ENCODE measurements at regions of chr11 and their contacts with region 1.

Region 1: GRCh38 chr11:1050581-1051355 is 14.2 kb upstream of the MUC6 start:
- DNase-seq: peak; percentile 74
- ATAC-seq: peak; percentile 95

Region 2: DNA sequence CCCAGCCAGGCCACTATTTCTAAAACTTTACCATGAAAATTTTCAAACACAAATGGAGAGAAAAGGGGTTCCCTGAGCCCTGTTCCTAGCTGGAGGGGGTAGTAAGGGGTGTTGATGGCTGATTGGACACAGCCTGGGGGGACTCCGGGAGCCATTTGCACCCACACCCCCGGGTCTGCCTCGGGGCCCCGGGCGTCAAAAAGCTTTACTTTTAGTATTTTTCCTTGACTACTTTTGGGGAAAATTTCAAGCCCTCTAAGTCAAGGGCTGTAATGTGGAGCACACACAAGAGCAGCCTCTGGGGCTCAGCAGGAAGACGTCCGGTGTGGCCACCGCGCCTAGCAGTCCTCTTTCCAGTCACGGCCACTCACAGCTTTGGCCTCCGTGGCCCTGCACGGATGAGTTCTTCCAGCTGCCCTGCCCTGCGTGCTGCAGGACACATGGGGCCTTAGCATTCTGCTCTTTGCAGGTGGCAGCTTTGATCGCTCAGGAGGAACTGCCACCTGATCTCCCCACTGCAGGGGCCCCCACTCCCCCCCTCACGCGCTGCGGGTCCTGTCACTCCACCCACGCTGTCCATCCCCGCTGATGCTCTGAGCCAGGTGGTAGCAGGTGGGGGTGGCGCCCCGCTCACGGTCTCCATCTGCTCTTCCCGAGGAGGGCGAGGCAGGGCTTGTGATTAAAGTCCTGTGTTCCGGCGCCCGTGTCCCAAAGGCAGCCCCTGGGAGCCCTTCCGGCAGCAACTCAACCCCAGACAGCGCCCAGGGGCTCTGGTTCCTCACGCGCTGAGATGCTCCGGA is 558.1 kb before region 1 on chr11:
- intact Hi-C with region 1: no loop called
- DNase-seq: no peak
- ATAC-seq: no peak

Region 3: DNA sequence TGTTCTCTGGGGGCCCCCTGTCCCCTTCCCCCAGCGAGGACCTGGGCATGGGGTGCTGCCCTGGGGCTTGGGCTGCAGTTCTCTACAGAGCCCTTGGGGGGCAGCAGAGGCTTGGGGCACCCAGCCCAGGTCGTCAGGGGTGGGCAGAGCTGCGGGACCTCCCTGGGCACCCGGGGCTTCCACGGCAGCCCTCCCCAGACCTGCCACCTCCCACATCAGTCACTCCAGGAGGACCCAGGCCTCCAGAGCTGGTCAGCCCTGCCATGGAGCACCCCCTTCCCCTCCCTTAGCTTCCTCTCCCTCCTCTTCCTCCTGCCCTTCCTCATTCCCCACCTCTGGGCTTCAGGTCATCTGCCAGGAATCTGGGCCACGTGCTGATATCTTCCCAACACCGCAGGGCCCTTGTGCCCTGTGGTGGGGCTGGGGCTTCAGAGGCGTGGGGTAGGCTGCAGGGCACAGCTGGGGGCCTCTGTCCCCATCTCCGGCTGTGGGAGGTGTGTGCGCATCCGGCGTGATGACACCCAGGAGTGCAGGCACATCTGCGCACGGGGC is 202.3 kb before region 1 on chr11:
- intact Hi-C with region 1: loop called (anchors 5 kb)
- DNase-seq: peak; percentile 67
- ATAC-seq: no peak

Region 4: GRCh38 chr11:925496-926321 is 125.1 kb before region 1 on chr11 and contains the start of gene AP2A2:
- intact Hi-C with region 1: loop called (anchors 10 kb)
- DNase-seq: peak; percentile 94
- ATAC-seq: peak; percentile 94
- total RNA-seq, gene AP2A2: 53.5 TPM

Measured in Right ventricle myocardium superior (tissue), 1 donor.